ENCODE measurements at regions of chr4 and their contacts with region 1.

Region 1: GRCh38 chr4:10239982-10240654 is 123.5 kb upstream of the WDR1 start:
- DNase-seq: no peak
- ATAC-seq: no peak
- H3K4me3 ChIP-seq: no peak overlapping the region
- H3K4me3 Mint-ChIP-seq: no peak overlapping the region
- H3K27ac ChIP-seq: no peak overlapping the region
- H3K27ac Mint-ChIP-seq: no peak overlapping the region
- H3K4me1 ChIP-seq: no peaks in the 10 kb centered on the region
- H3K4me1 Mint-ChIP-seq: no peaks in the 10 kb centered on the region
- H3K27me3 ChIP-seq: no peaks in the 10 kb centered on the region
- H3K27me3 Mint-ChIP-seq: peaks cover 5% of the 10 kb centered on the region
- CTCF ChIP-seq: no peak

Region 2: GRCh38 chr4:11814758-11815157 is 1574.6 kb after region 1 on chr4:
- CTCF ChIA-PET with region 1: no interaction called
- POLR2A ChIA-PET with region 1: no interaction called
- intact Hi-C with region 1: loop called in 1 of 2 experiments (anchors 5 kb)
- DNase-seq: no peak
- ATAC-seq: no peak
- H3K4me3 ChIP-seq: no peak overlapping the region
- H3K4me3 Mint-ChIP-seq: no peak overlapping the region
- H3K27ac ChIP-seq: no peak overlapping the region
- H3K27ac Mint-ChIP-seq: no peak overlapping the region
- H3K4me1 ChIP-seq: no peaks in the 10 kb centered on the region
- H3K4me1 Mint-ChIP-seq: no peaks in the 10 kb centered on the region
- H3K27me3 ChIP-seq: no peaks in the 10 kb centered on the region
- H3K27me3 Mint-ChIP-seq: no peaks in the 10 kb centered on the region
- CTCF ChIP-seq: no peak

Measured in CD8-positive, alpha-beta T cell (primary cell).